Adrenal gland (tissue), 19 donors: ENCODE measurements at regions of chrX and their contacts with region 1.

Region 1: GRCh38 chrX:68929332-68930150 is 100.7 kb downstream of the EFNB1 start:
- DNase-seq: peak; percentile 53 to 78 (median 69)
- H3K4me3 ChIP-seq: no peak overlapping the region
- H3K27ac ChIP-seq: peak overlapping the region in 2 of 5 donors; percentile 17 to 66
- H3K4me1 ChIP-seq: peaks cover 11 to 15% of the 10 kb centered on the region in 2 donors
- H3K27me3 ChIP-seq: no peaks in the 10 kb centered on the region
- CTCF ChIP-seq: no peak
- POLR2A ChIP-seq: no peak

Region 2: DNA sequence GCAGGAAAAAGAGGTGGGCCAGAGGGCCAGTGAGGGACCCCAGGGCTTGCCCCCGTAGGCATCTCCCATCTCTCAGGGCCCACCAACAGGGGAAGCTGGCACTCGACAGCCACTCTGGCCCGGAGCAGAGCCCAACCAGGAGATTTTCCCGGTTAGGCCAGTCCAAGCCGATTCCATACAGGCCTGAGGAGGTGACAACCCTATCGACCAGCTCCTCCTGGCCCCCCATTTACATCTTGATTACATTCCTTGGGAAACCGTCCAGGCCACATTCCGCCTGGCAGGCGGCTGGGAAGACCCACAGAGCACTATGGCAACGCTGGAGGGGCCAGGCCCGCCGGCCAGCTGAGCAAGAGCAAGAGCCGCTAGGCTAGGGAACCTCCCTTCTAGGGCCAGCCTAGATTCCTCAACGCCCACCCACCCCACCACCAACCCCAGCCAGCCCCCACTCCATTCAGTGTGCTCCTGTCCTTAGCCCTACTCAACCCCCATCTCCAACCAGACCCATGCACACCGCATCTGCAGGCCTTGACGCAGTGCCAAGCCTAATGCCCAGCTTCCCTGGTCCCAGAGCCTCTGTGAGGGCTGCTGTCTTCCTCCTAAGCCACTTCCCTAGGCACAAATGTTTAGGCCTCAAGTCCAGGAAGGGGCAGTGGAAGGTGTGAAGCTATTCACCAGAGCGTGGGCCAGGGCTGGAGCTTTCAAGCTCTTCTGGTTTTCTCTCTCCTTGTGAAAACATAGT is 60.5 kb after region 1 on chrX:
- intact Hi-C with region 1: loop called in 1 of 2 experiments (anchors 10 kb)
- DNase-seq: peak in 6 of 7 donors; percentile 17 to 54 (median 43)
- H3K4me3 ChIP-seq: no peak overlapping the region
- H3K27ac ChIP-seq: peak overlapping the region in 1 of 5 donors; percentile 55
- H3K4me1 ChIP-seq: peaks cover 0 to 1% of the 10 kb centered on the region in 2 donors
- H3K27me3 ChIP-seq: peaks cover 12% of the 10 kb centered on the region
- CTCF ChIP-seq: no peak
- POLR2A ChIP-seq: no peak